ENCODE measurements at regions of chr3 and their contacts with region 1.

Region 1: GRCh38 chr3:58491506-58492402 is at the start of gene KCTD6:
- DNase-seq: peak; percentile 86
- H3K4me3 ChIP-seq: peak within 1 kb of the TSS; percentile 64 to 92
- H3K27ac ChIP-seq: peak within 1 kb of the TSS; percentile 75 to 77
- H3K4me1 ChIP-seq: peaks cover 7% of the 10 kb centered on the region
- H3K27me3 ChIP-seq: no peaks in the 10 kb centered on the region
- CTCF ChIP-seq: peak; percentile 53 to 92 (median 71)
- POLR2A ChIP-seq: no peak
- total RNA-seq, gene KCTD6: 7.2 to 14.9 TPM

Region 2: DNA sequence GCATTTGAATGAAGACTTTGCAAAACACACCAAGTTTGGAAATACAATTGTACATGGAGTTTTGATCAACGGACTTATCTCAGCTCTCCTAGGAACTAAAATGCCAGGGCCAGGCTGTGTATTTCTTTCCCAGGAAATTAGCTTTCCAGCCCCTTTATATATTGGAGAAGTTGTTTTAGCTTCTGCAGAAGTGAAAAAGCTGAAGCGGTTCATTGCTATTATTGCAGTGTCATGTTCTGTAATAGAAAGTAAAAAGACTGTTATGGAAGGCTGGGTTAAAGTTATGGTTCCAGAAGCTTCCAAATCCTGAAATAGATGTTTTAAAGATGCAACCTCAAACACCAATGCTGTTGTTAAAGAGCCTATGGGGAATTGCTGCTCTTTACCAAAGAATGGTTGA is 173.9 kb before region 1 on chr3:
- intact Hi-C with region 1: no loop called
- DNase-seq: no peak
- H3K4me3 ChIP-seq: no peak overlapping the region
- H3K27ac ChIP-seq: no peak overlapping the region
- H3K4me1 ChIP-seq: no peaks in the 10 kb centered on the region
- H3K27me3 ChIP-seq: no peaks in the 10 kb centered on the region
- CTCF ChIP-seq: no peak
- POLR2A ChIP-seq: no peak

Region 3: DNA sequence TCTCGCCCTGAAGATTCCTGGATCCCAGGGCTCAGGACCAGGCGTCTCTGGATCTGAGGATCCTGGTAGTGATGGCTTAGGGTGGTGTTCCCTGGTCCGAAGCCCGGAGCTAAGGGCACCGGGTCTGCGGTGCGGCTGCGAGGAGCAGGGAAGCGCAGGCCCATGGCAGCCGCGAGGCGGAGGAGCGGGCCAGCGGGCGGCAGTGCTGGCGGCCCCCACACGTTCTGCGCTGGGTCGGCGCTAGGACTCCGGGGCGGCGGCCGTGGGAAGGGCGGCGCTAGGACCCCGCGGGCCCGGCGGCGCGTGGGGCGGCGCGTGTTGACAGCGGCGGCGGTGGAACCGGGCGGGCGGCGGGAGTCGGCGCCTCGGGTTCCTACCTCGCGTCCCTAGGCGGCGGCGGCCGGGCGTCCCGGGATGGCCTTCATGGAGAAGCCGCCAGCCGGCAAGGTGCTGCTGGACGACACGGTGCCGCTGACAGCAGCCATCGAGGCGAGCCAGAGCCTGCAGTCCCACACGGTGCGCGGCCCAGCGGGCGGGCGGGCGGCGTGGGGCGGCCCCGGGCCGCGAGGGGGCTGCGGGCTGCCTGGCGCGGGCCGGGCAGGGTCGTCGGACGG is 159.1 kb before region 1 on chr3 and contains the start of gene PXK:
- intact Hi-C with region 1: loop called (anchors 5 kb)
- DNase-seq: peak; percentile 71
- H3K4me3 ChIP-seq: peak within 1 kb of the TSS; percentile 73 to 80
- H3K27ac ChIP-seq: peak within 1 kb of the TSS; percentile 54 to 57
- H3K4me1 ChIP-seq: no peaks in the 10 kb centered on the region
- H3K27me3 ChIP-seq: no peaks in the 10 kb centered on the region
- CTCF ChIP-seq: peak in 2 of 4 experiments; percentile 25 to 40
- POLR2A ChIP-seq: peak; percentile 29
- total RNA-seq, gene PXK: 19.6 to 21.8 TPM

Region 4: GRCh38 chr3:58532794-58533220 is 41.1 kb after region 1 on chr3:
- intact Hi-C with region 1: loop called (anchors 5 kb)
- DNase-seq: peak; percentile 43
- H3K4me3 ChIP-seq: no peak overlapping the region
- H3K27ac ChIP-seq: no peak overlapping the region
- H3K4me1 ChIP-seq: no peaks in the 10 kb centered on the region
- H3K27me3 ChIP-seq: no peaks in the 10 kb centered on the region
- CTCF ChIP-seq: peak; percentile 86 to 96 (median 92)
- POLR2A ChIP-seq: no peak

Region 5: DNA sequence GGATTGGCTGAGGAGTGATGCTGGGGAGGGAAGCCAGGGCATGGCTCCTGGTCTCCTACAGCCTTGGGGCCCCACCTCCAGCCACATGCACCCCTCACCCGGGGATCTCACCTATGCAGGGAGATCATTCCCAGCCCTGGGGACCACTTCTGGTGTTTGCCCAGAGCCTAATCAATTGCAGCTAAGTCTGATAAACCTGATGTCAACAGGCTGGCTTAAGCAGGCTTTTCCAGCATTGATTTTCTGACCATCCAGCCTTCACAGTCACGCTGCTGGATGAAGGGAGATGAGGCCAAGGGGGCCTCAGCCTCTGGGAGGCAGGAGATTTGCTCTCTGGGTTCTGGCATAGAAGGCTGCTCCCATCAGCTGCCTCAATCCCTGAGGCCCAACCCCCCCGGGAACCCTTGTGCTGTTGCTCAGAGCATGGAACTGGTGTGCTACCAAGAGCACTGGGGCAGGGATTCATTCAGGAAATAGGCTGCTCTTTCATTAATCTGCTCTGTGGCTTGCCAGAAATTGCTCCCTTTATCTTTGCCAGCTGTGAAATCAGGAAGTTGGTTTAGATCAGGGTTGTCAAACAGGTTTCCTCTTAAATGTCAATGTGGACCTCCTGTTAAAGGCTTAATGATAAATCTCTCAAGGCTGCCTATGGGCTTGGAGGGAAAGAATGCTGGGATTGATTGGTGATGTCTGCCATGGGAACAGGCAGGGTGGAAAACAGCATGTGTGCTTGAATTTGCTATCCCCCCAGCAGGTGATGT is 155.8 kb after region 1 on chr3:
- intact Hi-C with region 1: no loop called
- DNase-seq: peak; percentile 53
- H3K4me3 ChIP-seq: no peak overlapping the region
- H3K27ac ChIP-seq: peak overlapping the region in 1 of 2 donors; percentile 20
- H3K4me1 ChIP-seq: peaks cover 9% of the 10 kb centered on the region
- H3K27me3 ChIP-seq: no peaks in the 10 kb centered on the region
- CTCF ChIP-seq: no peak
- POLR2A ChIP-seq: no peak

Measured in prostate gland (tissue), 2 donors.